ENCODE measurements at regions of chr12 and their contacts with region 1.

Region 1: DNA sequence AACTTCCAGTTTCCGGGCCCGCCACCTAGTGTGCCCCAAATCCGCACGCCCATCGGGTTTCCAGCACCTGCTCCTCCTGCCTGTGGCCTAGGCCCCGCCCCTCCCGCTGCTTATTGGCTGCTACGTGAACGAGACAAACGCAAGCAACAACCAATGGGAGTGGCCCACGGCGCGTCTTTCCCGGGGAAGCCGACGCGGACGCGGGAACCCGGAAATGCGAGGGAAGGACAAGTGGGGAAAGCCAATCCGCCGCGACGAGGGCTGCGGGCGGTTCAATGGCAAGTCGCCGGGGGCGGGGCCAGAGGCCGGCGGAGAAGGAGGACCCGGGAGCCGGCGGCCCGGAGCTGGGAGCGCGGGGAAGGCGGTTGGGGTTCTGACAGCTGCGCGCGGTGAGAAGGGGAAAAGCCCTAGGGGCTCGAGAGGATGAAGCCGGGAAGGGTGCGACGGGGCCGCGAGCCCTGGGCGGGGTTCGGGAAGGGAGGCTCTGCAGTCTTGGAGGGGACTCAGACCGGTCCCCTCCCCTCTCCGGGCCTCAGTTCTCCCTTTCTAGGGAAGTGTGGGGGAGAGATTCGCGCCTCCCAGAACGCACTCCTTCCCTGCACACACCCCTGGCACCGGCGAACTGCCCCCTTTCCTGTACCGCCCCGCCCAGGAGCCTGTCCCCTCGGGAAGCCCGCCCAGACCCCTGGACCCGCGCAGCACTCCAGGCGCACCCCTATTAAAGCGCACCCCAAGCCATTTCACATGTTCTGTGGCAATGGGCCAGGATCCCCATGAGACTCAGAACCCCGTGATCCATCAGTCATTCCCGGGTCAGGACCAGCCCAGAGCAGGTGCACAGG is at the start of gene FICD:
- DNase-seq: peak; percentile 100
- ATAC-seq: peak; percentile 96
- H3K4me3 ChIP-seq: peak within 1 kb of the TSS; percentile 55 to 57
- H3K27ac ChIP-seq: no peak within 1 kb of the TSS
- H3K4me1 ChIP-seq: no peaks in the 10 kb centered on the region
- H3K27me3 ChIP-seq: no peaks in the 10 kb centered on the region
- total RNA-seq, gene FICD: 6.5 to 14.5 TPM

Region 2: GRCh38 chr12:107760809-107761501 is 754.2 kb before region 1 on chr12 and contains the start of gene PRDM4:
- intact Hi-C with region 1: loop called in 1 of 2 experiments (anchors 5 kb)
- DNase-seq: peak; percentile 96 to 97
- ATAC-seq: peak; percentile 99
- H3K4me3 ChIP-seq: peak within 1 kb of the TSS; percentile 84 to 93
- H3K27ac ChIP-seq: peak within 1 kb of the TSS in 1 of 2 donors; percentile 34
- H3K4me1 ChIP-seq: peaks cover 3% of the 10 kb centered on the region in 2 donors
- H3K27me3 ChIP-seq: no peaks in the 10 kb centered on the region
- total RNA-seq, gene PRDM4: 26.2 to 26.7 TPM

Region 3: DNA sequence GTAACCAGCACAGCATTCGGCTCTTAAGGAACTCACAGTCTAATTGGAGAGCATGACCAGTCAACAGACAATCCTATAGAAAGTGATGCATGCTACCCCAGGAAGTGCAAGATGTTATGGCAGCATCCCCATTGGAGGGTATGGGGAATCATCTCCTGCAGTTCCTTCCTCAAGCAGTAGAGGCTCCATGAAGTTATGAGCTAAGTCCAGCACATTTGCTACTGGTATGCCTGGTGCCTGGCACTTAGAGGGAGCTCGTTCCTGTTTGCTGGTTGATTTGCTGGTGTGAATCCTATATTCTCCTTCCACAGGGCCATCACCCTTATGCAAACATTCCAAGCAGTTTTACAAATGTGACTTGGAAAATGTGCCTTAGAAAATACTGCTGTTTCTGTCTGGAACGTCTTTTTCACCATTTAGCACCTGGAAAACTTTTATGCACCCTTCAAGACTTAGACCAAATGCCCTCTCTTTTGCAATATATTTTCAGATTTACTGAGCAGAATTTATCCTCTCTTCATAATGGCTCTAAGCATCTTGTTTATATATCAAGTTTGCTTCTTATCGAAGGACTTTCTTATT is 522.2 kb before region 1 on chr12:
- intact Hi-C with region 1: loop called in 1 of 2 experiments (anchors 5 kb)
- DNase-seq: no peak
- ATAC-seq: no peak
- H3K4me3 ChIP-seq: no peak overlapping the region
- H3K27ac ChIP-seq: no peak overlapping the region
- H3K4me1 ChIP-seq: no peaks in the 10 kb centered on the region
- H3K27me3 ChIP-seq: no peaks in the 10 kb centered on the region

Region 4: GRCh38 chr12:108099073-108099472 is 416.1 kb before region 1 on chr12:
- intact Hi-C with region 1: loop called in 1 of 2 experiments (anchors 5 kb)
- DNase-seq: no peak
- ATAC-seq: no peak
- H3K4me3 ChIP-seq: no peak overlapping the region
- H3K27ac ChIP-seq: no peak overlapping the region
- H3K4me1 ChIP-seq: no peaks in the 10 kb centered on the region
- H3K27me3 ChIP-seq: peaks cover 0 to 2% of the 10 kb centered on the region in 2 donors

Region 5: DNA sequence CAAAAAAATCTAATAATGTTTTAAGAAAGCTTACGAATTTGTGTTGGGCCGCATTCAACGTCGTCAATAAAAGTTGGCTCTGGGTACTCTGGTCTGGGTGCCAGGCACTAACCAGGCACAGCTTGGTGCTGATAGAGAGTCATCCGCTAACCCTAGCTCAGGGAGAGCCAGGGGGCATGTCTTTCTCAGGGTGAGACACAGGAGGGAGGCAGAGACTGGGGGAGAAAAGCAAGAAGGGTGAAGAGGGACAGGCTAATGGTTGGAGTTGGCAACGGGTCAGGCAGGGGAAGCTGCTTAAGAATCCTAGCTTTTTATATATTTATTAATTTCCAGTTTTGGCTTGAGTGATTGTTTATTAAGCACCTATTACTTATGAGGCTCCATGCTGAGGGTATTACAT is 281.0 kb before region 1 on chr12:
- intact Hi-C with region 1: loop called in 1 of 2 experiments (anchors 2 kb)
- DNase-seq: peak in 1 of 2 donors; percentile 61
- ATAC-seq: peak; percentile 55
- H3K4me3 ChIP-seq: no peak overlapping the region
- H3K27ac ChIP-seq: no peak overlapping the region
- H3K4me1 ChIP-seq: no peaks in the 10 kb centered on the region
- H3K27me3 ChIP-seq: no peaks in the 10 kb centered on the region

Region 6: DNA sequence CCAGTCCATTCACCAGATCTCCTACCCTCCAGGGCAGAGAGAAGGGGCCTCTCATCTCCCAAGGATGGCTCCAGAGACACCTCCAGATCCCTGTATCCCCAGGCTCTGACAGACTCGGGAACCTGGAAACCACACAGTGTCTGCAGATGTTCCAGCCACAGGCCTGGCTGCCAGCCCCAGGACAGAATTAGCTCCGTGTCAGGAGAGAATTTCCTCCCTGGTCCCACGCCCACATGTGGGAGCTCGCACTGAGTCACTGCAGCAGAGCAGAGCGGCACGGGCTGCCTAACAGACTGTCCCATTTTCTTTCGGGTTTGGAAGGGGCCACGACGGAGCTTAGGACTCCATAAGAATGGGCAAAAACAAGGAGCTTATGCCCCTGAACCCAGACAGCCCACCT is 209.7 kb before region 1 on chr12:
- intact Hi-C with region 1: loop called in 1 of 2 experiments (anchors 5 kb)
- DNase-seq: peak; percentile 95 to 97
- ATAC-seq: peak; percentile 82
- H3K4me3 ChIP-seq: peak overlapping the region in 1 of 2 donors; percentile 22
- H3K27ac ChIP-seq: peak overlapping the region; percentile 88 to 99
- H3K4me1 ChIP-seq: peaks cover 2 to 11% of the 10 kb centered on the region in 2 donors
- H3K27me3 ChIP-seq: no peaks in the 10 kb centered on the region

Region 7: GRCh38 chr12:108403952-108404351 is 111.2 kb before region 1 on chr12:
- intact Hi-C with region 1: no loop called
- DNase-seq: no peak
- ATAC-seq: no peak
- H3K4me3 ChIP-seq: no peak overlapping the region
- H3K27ac ChIP-seq: no peak overlapping the region
- H3K4me1 ChIP-seq: no peaks in the 10 kb centered on the region
- H3K27me3 ChIP-seq: no peaks in the 10 kb centered on the region